PC-9 (cell line): ENCODE measurements at regions of chr7 and their contacts with region 1.

Region 1: DNA sequence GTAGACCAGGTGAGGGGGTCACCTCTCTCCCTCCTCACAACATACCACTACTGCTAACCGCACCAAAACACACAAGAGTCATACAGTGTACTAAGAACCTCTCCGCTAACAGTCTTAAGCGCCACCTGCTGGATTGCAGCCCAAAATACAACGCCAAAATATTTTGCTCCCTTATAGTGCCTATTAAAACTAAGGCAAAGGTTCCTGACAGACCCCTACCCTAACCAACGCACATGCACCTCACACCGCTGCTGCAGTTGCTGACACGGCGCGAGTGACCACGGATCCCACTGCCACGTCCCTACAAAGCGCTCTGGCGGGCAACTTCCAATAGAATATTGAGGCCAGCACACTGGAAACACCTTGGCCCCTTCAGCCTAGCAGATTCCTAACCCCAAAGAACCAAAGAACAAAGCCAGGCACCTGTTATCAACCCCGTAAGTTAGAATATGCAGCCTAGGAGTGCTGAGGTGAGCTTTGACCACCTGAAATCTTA is 563.6 kb upstream of the SEMA3D start:
- DNase-seq: peak in 1 of 2 experiments; percentile 33
- H3K4me3 ChIP-seq: no peak overlapping the region
- H3K27ac ChIP-seq: no peak overlapping the region
- H3K4me1 ChIP-seq: no peaks in the 10 kb centered on the region
- H3K27me3 ChIP-seq: no peaks in the 10 kb centered on the region
- CTCF ChIP-seq: peak; percentile 74

Region 2: DNA sequence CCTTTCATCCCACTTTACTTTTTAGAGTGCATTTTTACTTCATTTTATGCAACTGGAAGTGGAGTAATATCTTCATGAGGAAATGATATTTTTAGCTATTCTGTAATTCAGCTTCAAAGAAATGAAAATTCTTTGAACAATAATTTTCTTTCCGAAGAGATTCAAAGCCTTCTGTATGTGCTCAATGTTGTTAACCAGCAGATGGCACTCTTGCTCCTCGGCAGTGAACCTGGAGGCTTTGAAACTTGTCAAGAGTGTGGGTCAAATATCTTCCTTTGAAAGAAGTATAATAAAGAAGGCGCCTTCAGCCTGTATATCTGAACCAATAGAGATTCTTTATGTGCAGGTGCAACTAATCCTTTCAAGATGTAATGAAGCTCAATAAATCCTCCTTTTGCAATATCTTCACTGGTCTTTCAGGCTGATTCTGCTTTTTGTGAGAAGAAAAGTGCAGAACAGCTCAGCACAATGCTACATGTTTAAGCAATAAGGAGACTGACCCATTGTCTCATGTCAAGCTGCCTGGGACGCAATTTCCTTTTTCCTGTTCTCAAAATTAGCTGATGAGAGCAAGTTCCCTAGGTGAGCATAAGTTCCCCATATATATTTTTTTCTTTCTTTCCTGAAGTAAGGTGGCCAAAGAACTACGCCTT is 1814.3 kb before region 1 on chr7:
- CTCF ChIA-PET with region 1: no interaction called
- POLR2A ChIA-PET with region 1: no interaction called
- intact Hi-C with region 1: loop called (anchors 2 kb)
- DNase-seq: peak; percentile 49 to 72
- H3K4me3 ChIP-seq: no peak overlapping the region
- H3K27ac ChIP-seq: no peak overlapping the region
- H3K4me1 ChIP-seq: no peaks in the 10 kb centered on the region
- H3K27me3 ChIP-seq: no peaks in the 10 kb centered on the region
- CTCF ChIP-seq: peak; percentile 91

Region 3: DNA sequence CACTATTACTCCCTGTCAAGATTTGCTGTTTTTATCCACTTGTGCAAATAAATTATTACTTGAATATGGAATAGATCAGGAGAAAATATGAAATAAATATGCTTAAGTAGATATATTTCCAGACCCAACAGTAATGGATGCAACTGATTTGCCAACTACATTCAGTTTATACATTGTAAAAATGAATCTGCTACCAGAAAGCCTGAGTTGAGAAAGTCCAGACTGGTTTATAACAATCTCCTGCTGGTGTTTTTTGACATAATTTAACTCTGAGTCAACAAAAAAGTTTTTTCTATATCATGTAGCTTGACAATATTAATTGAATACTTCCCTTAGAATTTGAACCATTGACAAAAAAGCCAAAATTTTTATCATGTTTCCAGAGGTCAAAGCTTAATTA is 297.8 kb before region 1 on chr7:
- CTCF ChIA-PET with region 1: no interaction called
- POLR2A ChIA-PET with region 1: no interaction called
- intact Hi-C with region 1: no loop called
- DNase-seq: no peak
- H3K4me3 ChIP-seq: no peak overlapping the region
- H3K27ac ChIP-seq: no peak overlapping the region
- H3K4me1 ChIP-seq: no peaks in the 10 kb centered on the region
- H3K27me3 ChIP-seq: no peaks in the 10 kb centered on the region
- CTCF ChIP-seq: no peak

Region 4: DNA sequence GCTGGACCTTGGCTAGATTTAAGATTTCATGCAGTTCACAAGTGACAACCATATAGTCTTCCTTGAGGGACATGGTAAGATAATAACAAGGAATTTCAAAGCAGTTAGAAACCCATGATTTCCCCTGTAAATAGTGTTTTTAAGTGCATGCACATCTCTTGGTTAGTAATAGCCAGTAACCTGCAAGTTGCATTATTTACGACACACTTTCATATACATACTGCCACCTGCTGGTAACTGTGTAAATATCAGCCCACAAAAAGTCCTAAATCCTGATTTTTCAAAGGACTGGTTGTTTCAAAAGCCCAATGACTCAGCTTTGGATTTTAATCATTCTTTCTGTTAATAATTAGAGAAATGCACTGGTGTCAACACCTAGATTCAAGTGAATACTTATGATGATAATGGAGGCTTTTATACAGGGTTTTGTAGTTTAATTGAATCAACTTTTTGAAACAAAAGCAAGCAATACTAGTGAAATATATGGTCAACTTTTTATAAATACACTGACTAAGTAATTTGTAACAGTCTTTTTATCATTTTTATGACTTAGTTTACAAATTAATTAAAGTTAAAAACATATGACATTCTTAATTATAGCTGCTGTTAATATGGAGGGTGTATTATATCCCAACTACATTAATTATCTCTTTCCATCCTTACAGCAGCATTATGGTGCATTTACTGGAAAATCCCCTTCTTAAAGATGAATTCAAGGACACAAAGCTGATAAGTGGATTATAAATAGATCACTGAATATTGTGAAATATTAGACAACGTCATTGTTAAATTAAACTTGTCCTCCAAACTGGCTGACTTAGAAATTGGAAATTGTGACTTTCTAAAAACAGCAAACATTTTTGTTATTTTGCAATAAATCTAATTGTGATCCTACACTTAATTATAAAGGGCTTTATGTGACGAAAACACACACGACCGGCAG is 196.0 kb before region 1 on chr7:
- CTCF ChIA-PET with region 1: no interaction called
- POLR2A ChIA-PET with region 1: no interaction called
- intact Hi-C with region 1: loop called (anchors 5 kb)
- DNase-seq: peak; percentile 6 to 55
- H3K4me3 ChIP-seq: no peak overlapping the region
- H3K27ac ChIP-seq: no peak overlapping the region
- H3K4me1 ChIP-seq: no peaks in the 10 kb centered on the region
- H3K27me3 ChIP-seq: no peaks in the 10 kb centered on the region
- CTCF ChIP-seq: peak; percentile 83

Region 5: DNA sequence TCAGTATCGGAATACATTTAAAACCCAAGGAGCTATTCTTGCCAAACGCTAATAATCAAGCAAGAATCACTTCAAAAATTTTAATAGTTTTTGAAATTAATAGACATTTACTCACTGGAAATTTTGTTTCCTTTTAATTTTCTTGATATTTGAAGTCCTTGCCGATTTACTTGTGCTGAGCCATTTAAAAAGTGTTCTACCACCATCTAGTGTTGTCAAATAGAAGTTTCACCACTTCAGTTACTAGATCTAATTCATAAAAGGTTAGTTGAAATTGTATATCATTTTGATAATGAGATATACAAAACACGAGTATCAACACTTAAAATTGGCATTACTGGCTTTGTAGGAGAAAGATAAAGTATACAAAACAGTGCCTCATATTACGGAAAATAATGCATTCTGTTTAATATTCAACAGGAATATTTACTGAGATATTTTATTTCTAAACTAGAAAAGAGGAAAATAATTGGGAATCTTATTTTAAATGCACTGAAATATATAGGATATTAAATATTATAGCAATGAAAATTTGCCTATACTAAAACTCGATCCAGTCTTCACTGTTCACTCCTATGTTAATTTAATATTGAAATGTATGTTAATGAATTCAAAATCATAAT is 101.2 kb after region 1 on chr7:
- CTCF ChIA-PET with region 1: no interaction called
- POLR2A ChIA-PET with region 1: no interaction called
- intact Hi-C with region 1: no loop called
- DNase-seq: no peak
- H3K4me3 ChIP-seq: no peak overlapping the region
- H3K27ac ChIP-seq: no peak overlapping the region
- H3K4me1 ChIP-seq: no peaks in the 10 kb centered on the region
- H3K27me3 ChIP-seq: no peaks in the 10 kb centered on the region
- CTCF ChIP-seq: peak; percentile 60